HEK293T (cell line): ENCODE measurements at regions of chr1 and their contacts with region 1.

Region 1: DNA sequence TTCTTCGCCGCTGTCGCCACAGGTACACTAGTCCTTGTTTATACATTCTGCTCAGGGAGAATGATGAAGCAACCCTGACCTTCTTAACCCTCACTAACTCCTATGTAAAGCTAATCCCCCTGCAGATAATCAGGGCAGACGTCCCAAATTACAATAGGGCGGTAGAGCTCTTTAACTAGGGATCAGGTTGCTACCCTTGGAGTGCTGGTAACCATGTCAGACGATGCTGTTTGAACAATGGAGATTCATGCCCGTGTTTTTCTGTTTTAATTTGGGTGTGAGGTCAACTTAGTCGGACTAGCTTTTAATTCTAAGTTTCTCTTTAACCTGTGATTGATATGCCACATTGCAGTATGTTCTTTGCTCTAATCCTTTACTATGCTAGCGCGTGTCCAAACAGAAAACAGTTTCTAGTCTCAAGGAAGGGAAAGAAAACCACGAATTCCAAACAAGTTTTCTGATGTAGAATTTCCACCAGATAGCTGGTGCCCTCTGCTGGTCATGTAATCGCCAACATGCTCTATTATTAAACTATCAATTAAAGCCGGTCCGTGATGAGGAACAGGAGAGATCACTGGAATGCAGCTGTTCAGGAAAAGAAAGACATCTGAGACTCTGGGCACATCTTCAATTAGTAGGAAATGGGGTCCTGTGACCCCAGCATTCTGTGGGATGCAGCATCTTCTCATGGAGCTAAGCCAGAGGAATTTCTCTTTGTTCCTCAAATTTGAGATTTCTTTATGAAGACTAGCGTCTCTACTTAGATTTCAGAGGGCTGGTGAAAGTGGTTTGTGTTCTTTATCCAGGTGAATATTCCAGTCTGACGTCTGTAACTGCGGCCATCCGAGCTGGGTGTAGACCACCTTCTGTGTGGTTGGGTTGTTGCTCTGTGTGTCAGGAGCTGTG is 18.3 kb upstream of the VAMP3 start:
- DNase-seq: peak; percentile 51

Region 2: GRCh38 chr1:7667625-7668218 is 85.0 kb before region 1 on chr1:
- CTCF ChIA-PET with region 1: interaction called, 82 read pairs
- POLR2A ChIA-PET with region 1: interaction called, 4 read pairs
- DNase-seq: peak; percentile 85

Region 3: GRCh38 chr1:7704214-7705047 is 48.3 kb before region 1 on chr1:
- CTCF ChIA-PET with region 1: no interaction called
- POLR2A ChIA-PET with region 1: interaction called, 10 read pairs
- DNase-seq: peak; percentile 99

Region 4: DNA sequence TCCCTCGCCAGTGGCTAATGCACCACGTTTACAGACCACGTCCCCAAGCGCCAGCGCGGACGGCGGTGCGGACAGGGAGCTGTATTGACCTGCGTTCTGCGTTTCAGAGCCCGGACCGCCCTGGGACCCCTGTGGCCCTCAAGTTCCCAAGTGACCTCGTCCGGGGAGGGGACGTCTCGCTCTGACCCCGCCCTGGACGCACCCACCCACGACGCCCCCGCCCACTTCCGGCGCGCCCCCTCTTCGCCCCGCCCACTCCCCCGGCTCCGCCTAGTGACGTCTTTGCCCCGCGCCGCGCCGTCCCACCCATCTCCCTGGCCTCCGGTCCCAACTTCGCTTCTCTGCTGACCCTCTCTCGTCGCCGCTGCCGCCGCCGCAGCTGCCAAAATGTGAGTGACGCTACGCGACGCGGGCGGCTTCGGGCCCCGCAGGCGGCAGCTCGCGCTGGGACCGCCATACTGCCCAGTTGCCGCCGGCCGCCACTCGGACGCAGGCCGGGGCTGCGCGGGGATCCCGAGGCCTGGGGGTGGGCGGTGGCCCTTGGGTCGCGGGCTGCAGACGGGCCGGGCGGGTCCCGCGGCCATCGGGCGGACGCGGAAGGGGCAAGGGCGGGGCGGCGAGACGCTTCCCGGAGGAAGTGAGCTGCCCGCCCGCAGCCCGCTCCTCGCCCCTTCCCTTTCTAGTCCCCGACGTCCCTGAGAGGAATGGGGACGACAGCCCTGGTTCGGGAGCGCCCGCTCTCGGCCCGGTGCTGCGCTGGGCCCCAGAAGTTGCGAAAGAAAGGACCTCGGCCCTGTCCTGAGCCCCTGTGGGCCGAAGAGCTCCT is 18.4 kb after region 1 on chr1 and contains the start of gene VAMP3:
- CTCF ChIA-PET with region 1: interaction called, 19 read pairs
- POLR2A ChIA-PET with region 1: interaction called, 5 read pairs
- DNase-seq: peak; percentile 96

Region 5: GRCh38 chr1:7845761-7846160 is 93.0 kb after region 1 on chr1:
- CTCF ChIA-PET with region 1: no interaction called
- POLR2A ChIA-PET with region 1: no interaction called
- DNase-seq: no peak